ENCODE measurements at regions of chr18 and their contacts with region 1.

Region 1: DNA sequence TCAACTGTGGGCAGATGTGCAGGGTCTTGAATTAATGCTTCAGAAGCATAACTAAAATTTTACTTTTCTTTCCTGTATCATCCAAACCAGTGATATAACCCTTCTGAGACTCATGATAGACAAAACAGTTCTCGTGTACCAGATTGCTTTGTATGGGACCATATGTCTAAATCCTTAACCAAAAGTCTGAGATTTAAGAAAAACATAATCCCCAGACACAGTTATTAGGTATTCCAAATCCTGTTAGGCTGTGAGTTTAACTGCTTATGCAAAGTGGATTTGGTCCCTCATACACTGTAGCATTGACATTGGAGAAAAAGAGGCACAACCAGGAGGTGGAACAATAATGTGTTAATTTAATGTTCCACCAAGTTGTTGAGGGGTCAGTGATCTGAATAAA is 235.0 kb downstream of the PMAIP1 start:
- DNase-seq: no peak
- H3K4me3 ChIP-seq: no peak overlapping the region
- H3K27ac ChIP-seq: no peak overlapping the region
- H3K4me1 ChIP-seq: no peaks in the 10 kb centered on the region
- H3K27me3 ChIP-seq: no peaks in the 10 kb centered on the region
- CTCF ChIP-seq: no peak

Region 2: GRCh38 chr18:60027397-60027796 is 107.4 kb before region 1 on chr18:
- intact Hi-C with region 1: no loop called
- DNase-seq: no peak
- H3K4me3 ChIP-seq: no peak overlapping the region
- H3K27ac ChIP-seq: no peak overlapping the region
- H3K4me1 ChIP-seq: no peaks in the 10 kb centered on the region
- H3K27me3 ChIP-seq: no peaks in the 10 kb centered on the region
- CTCF ChIP-seq: no peak

Region 3: GRCh38 chr18:60090170-60090569 is 44.6 kb before region 1 on chr18:
- intact Hi-C with region 1: loop called (anchors 5 kb)
- DNase-seq: no peak
- H3K4me3 ChIP-seq: no peak overlapping the region
- H3K27ac ChIP-seq: no peak overlapping the region
- H3K4me1 ChIP-seq: no peaks in the 10 kb centered on the region
- H3K27me3 ChIP-seq: no peaks in the 10 kb centered on the region
- CTCF ChIP-seq: no peak

Measured in colonic mucosa (tissue), 4 donors.